GM10248 (cell line): ENCODE measurements at regions of chr2 and their contacts with region 1.

Region 1: GRCh38 chr2:112685271-112685884 is 35.4 kb upstream of the NT5DC4 start:
- DNase-seq: no peak
- CTCF ChIP-seq: no peak

Region 2: GRCh38 chr2:112674229-112674628 is 11.1 kb before region 1 on chr2:
- CTCF ChIA-PET with region 1: interaction called, 67 read pairs
- POLR2A ChIA-PET with region 1: no interaction called
- DNase-seq: no peak
- CTCF ChIP-seq: no peak

Region 3: DNA sequence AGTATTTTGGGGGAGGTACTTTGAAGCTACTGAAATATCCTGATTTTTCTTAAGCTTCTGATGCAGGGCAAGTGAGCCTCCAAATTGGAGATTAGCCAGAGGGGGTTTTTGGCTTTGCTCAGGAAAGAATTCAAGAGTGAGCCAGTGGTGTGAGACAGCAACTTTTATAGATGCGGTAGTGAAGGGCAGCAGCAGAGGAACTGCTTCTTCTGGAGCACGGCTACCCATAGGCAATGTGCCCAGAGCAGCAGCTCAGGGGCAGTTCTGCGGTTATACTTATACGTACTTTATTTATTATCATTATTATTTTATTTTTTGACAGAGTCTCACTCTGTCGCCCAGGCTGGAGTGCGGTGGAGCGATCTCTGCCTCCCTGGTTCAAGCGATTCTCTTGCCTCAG is 15.7 kb after region 1 on chr2:
- CTCF ChIA-PET with region 1: interaction called, 40 read pairs
- POLR2A ChIA-PET with region 1: no interaction called
- DNase-seq: no peak
- CTCF ChIP-seq: no peak

Region 4: GRCh38 chr2:112996635-112997034 is 311.3 kb after region 1 on chr2:
- CTCF ChIA-PET with region 1: no interaction called
- POLR2A ChIA-PET with region 1: no interaction called
- DNase-seq: no peak
- CTCF ChIP-seq: no peak